ENCODE measurements at regions of chr5 and their contacts with region 1.

Region 1: GRCh38 chr5:97162045-97162444 is 19.6 kb upstream of the LIX1 start:
- DNase-seq: peak in 1 of 2 experiments; percentile 67
- H3K4me3 ChIP-seq: no peak overlapping the region
- H3K27ac ChIP-seq: no peak overlapping the region
- H3K4me1 ChIP-seq: no peaks in the 10 kb centered on the region
- H3K27me3 ChIP-seq: no peaks in the 10 kb centered on the region
- CTCF ChIP-seq: peak in 2 of 3 experiments; percentile 72 to 84; a peak in 3 of 4 replicates
- EP300 ChIP-seq: no peak
- POLR2A ChIP-seq: no peak
- RAD21 ChIP-seq: peak; percentile 90 to 93

Region 2: DNA sequence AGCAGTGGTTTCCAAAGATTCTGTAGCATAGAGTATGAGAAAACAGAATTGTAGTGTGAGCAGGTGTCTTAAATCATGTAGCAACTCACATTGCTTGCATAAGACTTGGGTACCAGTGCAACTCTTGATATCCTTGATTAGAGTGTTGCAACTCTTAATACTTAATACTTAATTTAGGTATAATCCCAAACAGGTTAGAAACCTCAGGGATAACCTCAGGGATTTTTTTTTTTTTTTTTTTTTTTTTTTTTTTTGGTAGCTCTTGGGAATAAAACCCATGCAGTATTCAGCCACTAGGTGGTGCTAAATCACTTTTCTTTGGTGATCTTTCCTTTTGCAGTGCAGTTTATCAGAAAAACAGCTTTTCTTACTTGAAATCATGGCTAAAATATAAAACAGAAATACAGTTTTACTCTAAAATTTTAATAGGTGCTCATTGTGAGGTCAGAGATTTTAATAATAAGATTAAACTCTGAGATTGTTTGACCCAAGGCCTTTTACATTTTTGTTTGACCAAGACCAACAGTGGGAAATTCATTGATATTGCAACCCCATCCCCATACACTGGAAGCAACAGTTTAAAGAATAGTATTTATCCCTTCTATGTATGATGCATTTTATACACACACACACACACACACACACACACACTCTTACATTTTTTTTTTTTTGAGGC is 409.6 kb before region 1 on chr5:
- CTCF ChIA-PET with region 1: interaction called, 10 read pairs
- POLR2A ChIA-PET with region 1: no interaction called
- DNase-seq: no peak
- H3K4me3 ChIP-seq: no peak overlapping the region
- H3K27ac ChIP-seq: no peak overlapping the region
- H3K4me1 ChIP-seq: no peaks in the 10 kb centered on the region
- H3K27me3 ChIP-seq: no peaks in the 10 kb centered on the region
- CTCF ChIP-seq: peak in 2 of 3 experiments; percentile 29 to 36; a peak in 2 of 4 replicates
- EP300 ChIP-seq: no peak
- POLR2A ChIP-seq: no peak
- RAD21 ChIP-seq: peak; percentile 65 to 66

Region 3: GRCh38 chr5:96868603-96869371 is 293.3 kb before region 1 on chr5:
- CTCF ChIA-PET with region 1: interaction called, 77 read pairs
- POLR2A ChIA-PET with region 1: no interaction called
- DNase-seq: no peak
- H3K4me3 ChIP-seq: no peak overlapping the region
- H3K27ac ChIP-seq: no peak overlapping the region
- H3K4me1 ChIP-seq: peaks cover 0 to 8% (median 5%) of the 10 kb centered on the region in 4 experiments; a peak in 4 of 7 replicates
- H3K27me3 ChIP-seq: no peaks in the 10 kb centered on the region
- CTCF ChIP-seq: peak in 2 of 3 experiments; percentile 81 to 92; a peak in 3 of 4 replicates
- EP300 ChIP-seq: no peak
- POLR2A ChIP-seq: no peak
- RAD21 ChIP-seq: peak; percentile 94 to 95

Region 4: GRCh38 chr5:97037819-97038218 is 124.2 kb before region 1 on chr5:
- CTCF ChIA-PET with region 1: interaction called, 118 read pairs
- POLR2A ChIA-PET with region 1: no interaction called
- DNase-seq: no peak
- H3K4me3 ChIP-seq: no peak overlapping the region
- H3K27ac ChIP-seq: no peak overlapping the region
- H3K4me1 ChIP-seq: peaks cover 0 to 5% (median 0%) of the 10 kb centered on the region in 4 experiments; a peak in 2 of 7 replicates
- H3K27me3 ChIP-seq: no peaks in the 10 kb centered on the region
- CTCF ChIP-seq: no peak
- EP300 ChIP-seq: no peak
- POLR2A ChIP-seq: no peak
- RAD21 ChIP-seq: no peak

Region 5: DNA sequence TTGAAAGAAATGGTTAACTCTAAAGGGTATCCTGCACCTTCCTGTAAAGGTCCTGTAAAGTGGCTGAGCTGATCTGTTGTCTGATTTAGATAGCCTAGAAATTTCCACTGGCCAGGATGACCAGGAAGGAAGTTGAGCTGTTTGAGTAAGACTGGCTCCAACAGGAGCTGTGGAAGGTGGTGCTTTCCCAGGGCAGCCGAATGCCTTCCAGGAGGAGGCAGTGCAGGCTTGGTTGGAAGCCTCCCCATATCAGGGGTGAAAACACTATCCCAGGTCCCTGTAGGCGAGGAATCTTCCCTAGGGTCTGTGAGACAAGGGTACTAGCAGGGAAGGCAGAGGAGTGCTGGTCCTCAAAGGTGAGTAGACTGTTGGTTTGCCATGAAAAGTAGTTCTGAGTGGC is 118.0 kb before region 1 on chr5:
- CTCF ChIA-PET with region 1: interaction called, 118 read pairs
- POLR2A ChIA-PET with region 1: no interaction called
- DNase-seq: peak; percentile 50 to 75
- H3K4me3 ChIP-seq: no peak overlapping the region
- H3K27ac ChIP-seq: no peak overlapping the region
- H3K4me1 ChIP-seq: peaks cover 0 to 3% (median under 1%) of the 10 kb centered on the region in 4 experiments; a peak in 3 of 7 replicates
- H3K27me3 ChIP-seq: no peaks in the 10 kb centered on the region
- CTCF ChIP-seq: peak; percentile 88 to 99 (median 88)
- EP300 ChIP-seq: no peak
- POLR2A ChIP-seq: no peak
- RAD21 ChIP-seq: peak; percentile 95 to 97

Region 6: GRCh38 chr5:97118261-97119006 is 43.6 kb before region 1 on chr5:
- CTCF ChIA-PET with region 1: no interaction called
- POLR2A ChIA-PET with region 1: no interaction called
- DNase-seq: no peak
- H3K4me3 ChIP-seq: no peak overlapping the region
- H3K27ac ChIP-seq: no peak overlapping the region
- H3K4me1 ChIP-seq: no peaks in the 10 kb centered on the region
- H3K27me3 ChIP-seq: no peaks in the 10 kb centered on the region
- CTCF ChIP-seq: no peak
- EP300 ChIP-seq: no peak
- POLR2A ChIP-seq: no peak
- RAD21 ChIP-seq: no peak

Region 7: DNA sequence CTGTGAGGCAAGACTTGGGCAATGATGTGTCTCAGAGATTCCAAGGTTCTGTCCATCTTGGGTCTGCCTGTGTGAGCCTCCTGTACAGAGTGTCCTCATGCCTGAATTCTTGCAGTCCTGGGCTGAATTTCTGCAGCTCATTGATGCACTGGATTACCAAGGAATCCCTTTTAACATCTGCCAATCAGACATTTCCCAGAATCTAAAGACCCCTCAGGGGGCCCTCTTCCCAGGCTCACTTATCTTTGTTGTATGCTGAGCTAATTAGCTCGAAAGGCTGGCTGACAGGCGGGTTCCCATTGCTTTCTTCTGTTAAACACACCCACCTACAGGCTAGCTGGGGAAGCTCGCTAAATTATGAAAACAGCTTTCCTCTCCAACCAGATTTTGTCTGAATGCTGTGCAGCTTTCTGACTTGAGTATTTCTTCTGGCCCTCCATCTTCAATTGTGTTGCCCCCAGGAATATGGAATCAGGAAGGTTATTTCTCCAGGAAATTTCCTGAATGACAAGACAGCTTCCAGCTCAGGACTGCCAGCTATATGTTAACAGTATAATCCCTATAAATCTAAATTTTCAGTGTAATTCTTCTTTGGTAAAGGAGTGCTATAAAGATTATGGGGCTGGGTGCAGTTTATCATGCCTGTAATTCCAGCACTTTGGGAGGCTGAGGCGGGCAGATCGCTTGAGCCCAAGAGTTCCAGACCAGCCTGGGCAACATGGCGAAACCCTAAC is 19.4 kb before region 1 on chr5 and contains the start of gene LIX1:
- CTCF ChIA-PET with region 1: interaction called, 28 read pairs
- POLR2A ChIA-PET with region 1: no interaction called
- DNase-seq: peak in 1 of 2 experiments; percentile 62
- H3K4me3 ChIP-seq: peak within 1 kb of the TSS in 1 of 4 experiments; percentile 12; a peak in 3 of 8 replicates
- H3K27ac ChIP-seq: no peak within 1 kb of the TSS
- H3K4me1 ChIP-seq: peaks cover 0 to 6% (median 2%) of the 10 kb centered on the region in 4 experiments; a peak in 4 of 7 replicates
- H3K27me3 ChIP-seq: no peaks in the 10 kb centered on the region
- CTCF ChIP-seq: peak; percentile 23 to 76 (median 70)
- EP300 ChIP-seq: no peak
- POLR2A ChIP-seq: no peak
- RAD21 ChIP-seq: peak; percentile 91 to 93
- total RNA-seq, gene LIX1: 0.26 and 0.33 TPM in 2 replicates

Region 8: GRCh38 chr5:97149709-97150108 is 12.3 kb before region 1 on chr5:
- CTCF ChIA-PET with region 1: interaction called, 17 read pairs
- POLR2A ChIA-PET with region 1: interaction called, 5 read pairs
- DNase-seq: no peak
- H3K4me3 ChIP-seq: no peak overlapping the region
- H3K27ac ChIP-seq: no peak overlapping the region
- H3K4me1 ChIP-seq: no peaks in the 10 kb centered on the region
- H3K27me3 ChIP-seq: no peaks in the 10 kb centered on the region
- CTCF ChIP-seq: no peak
- EP300 ChIP-seq: no peak
- POLR2A ChIP-seq: no peak
- RAD21 ChIP-seq: no peak